CD8-positive, alpha-beta memory T cell (primary cell): ENCODE measurements at regions of chr4 and their contacts with region 1.

Region 1: DNA sequence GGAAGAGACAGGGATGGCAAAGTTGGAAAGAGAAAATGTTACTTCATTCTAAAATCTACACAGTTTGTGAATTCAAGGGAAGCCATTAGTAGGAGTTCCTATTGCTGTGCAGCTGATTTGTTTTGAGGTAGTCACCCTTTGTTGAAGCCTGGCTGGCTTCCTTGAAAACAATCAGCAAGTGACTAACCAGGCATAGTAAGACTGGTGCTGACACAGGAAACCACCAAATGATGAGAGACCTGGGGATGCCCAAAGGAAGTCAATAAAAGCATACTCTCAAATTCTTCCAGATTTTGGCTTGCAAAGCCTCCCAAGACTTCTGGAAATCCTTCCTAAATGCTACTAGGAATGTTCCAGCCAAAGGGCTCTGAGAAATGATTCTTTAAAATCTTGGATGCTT is 23.9 kb upstream of the PRDM8 start:
- DNase-seq: peak in 4 of 5 donors; percentile 39 to 72 (median 66)
- H3K4me3 ChIP-seq: peak overlapping the region; percentile 2
- H3K4me3 Mint-ChIP-seq: peak overlapping the region; percentile 47 to 82 (median 71)
- H3K27ac ChIP-seq: no peak overlapping the region
- H3K27ac Mint-ChIP-seq: peak overlapping the region; percentile 83 to 98 (median 94)
- H3K4me1 ChIP-seq: peaks cover 43% of the 10 kb centered on the region
- H3K4me1 Mint-ChIP-seq: peaks cover 48 to 67% (median 55%) of the 10 kb centered on the region in 3 donors
- H3K27me3 ChIP-seq: no peaks in the 10 kb centered on the region
- H3K27me3 Mint-ChIP-seq: no peaks in the 10 kb centered on the region

Region 2: DNA sequence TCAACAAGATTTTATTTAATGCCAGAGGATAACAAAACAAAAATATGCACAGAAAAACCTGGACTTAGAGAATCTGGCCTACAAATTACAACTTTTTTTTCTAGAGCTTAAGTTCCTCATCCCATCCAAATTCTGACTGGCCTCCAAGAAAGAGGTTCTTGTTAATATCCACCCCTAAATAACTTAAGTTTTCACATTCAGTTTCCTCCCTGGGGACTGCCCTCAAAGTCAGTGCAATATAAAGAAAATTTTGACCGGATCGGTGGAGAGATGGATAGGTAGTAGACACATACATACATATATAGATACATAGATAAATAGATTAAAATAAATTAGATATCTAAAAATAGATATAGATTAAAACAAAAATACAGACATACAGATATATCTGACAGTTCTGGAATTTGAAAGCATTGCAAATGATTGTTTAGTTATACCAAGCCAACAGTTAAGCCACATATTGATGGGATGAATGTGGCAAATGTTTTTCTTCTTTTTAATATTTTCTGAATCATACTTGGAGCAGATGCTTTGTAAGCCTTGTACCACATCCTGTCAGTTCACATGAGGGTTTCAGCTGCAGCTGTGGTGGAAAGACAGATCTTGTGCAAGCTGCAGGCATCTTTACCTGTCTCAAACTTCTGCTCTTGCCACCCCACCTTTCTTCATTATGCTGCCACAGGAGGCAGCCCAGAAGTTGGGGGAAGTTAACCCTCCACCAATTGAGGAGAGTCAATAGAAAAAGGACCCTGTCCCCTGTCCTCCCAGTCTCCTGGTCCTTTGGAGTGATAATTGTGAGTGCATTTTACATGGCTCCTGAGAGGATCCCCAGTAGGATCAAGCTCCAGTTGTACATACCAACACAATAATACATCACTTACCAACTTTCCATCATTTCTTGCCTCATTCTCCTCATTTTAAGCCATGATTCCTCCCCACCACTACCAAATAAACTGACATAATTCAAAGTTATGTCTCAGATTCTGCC is 34.6 kb before region 1 on chr4:
- CTCF ChIA-PET with region 1: interaction called, 18 read pairs
- POLR2A ChIA-PET with region 1: interaction called, 3 read pairs
- DNase-seq: peak; percentile 7 to 72 (median 51)
- H3K4me3 ChIP-seq: no peak overlapping the region
- H3K4me3 Mint-ChIP-seq: peak overlapping the region in 6 of 7 donors; percentile 1 to 55 (median 6)
- H3K27ac ChIP-seq: peak overlapping the region; percentile 18
- H3K27ac Mint-ChIP-seq: peak overlapping the region; percentile 62 to 91 (median 79)
- H3K4me1 ChIP-seq: peaks cover 37% of the 10 kb centered on the region
- H3K4me1 Mint-ChIP-seq: peaks cover 26 to 54% (median 49%) of the 10 kb centered on the region in 3 donors
- H3K27me3 ChIP-seq: no peaks in the 10 kb centered on the region
- H3K27me3 Mint-ChIP-seq: no peaks in the 10 kb centered on the region

Region 3: DNA sequence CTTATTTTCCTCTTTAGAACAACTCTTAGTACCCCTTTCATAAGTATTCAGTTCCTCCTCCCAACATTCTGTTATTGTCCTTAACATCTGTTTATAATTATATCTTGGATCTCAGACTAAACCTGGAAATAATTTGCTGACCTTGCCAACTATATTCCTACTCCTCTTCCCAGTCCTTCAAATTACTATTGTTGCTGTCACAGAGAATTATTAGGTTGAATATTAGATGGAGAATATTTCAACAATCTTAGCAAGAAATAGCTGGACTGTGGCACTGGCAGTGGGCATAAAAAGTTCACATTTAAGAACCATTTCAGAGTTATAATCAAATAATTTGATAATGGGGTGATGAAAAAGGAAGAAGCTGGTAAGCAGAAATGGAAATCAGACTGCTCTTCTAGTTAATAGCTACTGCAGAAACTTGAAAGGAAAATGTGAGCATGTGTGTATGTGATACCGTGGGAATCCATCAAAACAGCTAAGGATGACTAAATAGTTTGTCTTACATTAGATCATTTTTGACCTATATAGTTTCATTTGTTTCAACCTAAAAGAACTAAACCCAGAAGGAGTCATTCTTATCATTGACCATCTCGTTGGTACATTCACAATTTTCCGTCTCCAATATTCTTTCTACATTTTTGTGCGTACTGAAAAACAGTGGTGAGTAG is 19.4 kb before region 1 on chr4:
- CTCF ChIA-PET with region 1: no interaction called
- POLR2A ChIA-PET with region 1: no interaction called
- DNase-seq: no peak
- H3K4me3 ChIP-seq: no peak overlapping the region
- H3K4me3 Mint-ChIP-seq: no peak overlapping the region
- H3K27ac ChIP-seq: no peak overlapping the region
- H3K27ac Mint-ChIP-seq: peak overlapping the region in 1 of 8 donors; percentile 35
- H3K4me1 ChIP-seq: no peaks in the 10 kb centered on the region
- H3K4me1 Mint-ChIP-seq: peaks cover 0 to 7% (median 3%) of the 10 kb centered on the region in 3 donors
- H3K27me3 ChIP-seq: no peaks in the 10 kb centered on the region
- H3K27me3 Mint-ChIP-seq: peaks cover 0 to 3% of the 10 kb centered on the region in 2 donors

Region 4: GRCh38 chr4:80221161-80221560 is 47.8 kb after region 1 on chr4:
- CTCF ChIA-PET with region 1: no interaction called
- POLR2A ChIA-PET with region 1: no interaction called
- DNase-seq: no peak
- H3K4me3 ChIP-seq: no peak overlapping the region
- H3K4me3 Mint-ChIP-seq: no peak overlapping the region
- H3K27ac ChIP-seq: no peak overlapping the region
- H3K27ac Mint-ChIP-seq: no peak overlapping the region
- H3K4me1 ChIP-seq: no peaks in the 10 kb centered on the region
- H3K4me1 Mint-ChIP-seq: no peaks in the 10 kb centered on the region
- H3K27me3 ChIP-seq: no peaks in the 10 kb centered on the region
- H3K27me3 Mint-ChIP-seq: peaks cover 14 to 50% of the 10 kb centered on the region in 2 donors